SK-N-SH (cell line): ENCODE measurements at regions of chr6 and their contacts with region 1.

Region 1: DNA sequence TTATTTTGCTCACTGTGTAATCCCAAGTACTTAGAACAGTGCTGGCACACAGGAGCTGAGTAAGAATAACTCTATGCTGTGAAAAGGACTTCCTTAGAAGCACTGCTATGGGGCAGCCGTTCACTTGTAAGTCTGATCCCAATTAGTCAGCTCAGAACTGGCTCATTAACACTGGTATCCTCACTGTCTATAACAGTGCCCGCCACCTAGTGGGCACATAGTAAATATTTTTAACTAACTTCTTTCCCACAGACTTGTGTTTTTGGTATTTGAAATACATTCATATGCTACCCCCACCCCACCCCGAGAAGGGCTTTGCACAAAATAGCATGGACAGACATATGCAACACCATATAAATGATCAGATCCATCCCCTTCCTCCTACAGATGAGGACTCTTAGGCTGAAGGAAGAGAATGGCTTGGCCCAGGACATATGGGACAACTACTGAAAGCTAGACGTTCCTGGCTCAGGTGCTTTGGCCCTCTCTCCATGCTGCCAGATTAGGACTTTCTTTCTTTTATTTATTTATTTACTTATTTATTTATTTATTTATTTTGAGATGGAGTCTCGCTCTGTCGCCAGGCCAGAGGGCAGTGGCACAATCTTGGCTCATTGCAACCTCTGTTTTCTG is 47.1 kb downstream of the DST start:
- DNase-seq: peak; percentile 10
- H3K4me3 ChIP-seq: no peak overlapping the region
- H3K27ac ChIP-seq: peak overlapping the region in 1 of 2 experiments; percentile 22; a peak in 1 of 4 replicates
- H3K4me1 ChIP-seq: no peaks in the 10 kb centered on the region; a peak in 2 of 4 replicates
- H3K27me3 ChIP-seq: no peaks in the 10 kb centered on the region
- CTCF ChIP-seq: peak; percentile 83
- EP300 ChIP-seq: no peak
- RAD21 ChIP-seq: peak; percentile 62

Region 2: DNA sequence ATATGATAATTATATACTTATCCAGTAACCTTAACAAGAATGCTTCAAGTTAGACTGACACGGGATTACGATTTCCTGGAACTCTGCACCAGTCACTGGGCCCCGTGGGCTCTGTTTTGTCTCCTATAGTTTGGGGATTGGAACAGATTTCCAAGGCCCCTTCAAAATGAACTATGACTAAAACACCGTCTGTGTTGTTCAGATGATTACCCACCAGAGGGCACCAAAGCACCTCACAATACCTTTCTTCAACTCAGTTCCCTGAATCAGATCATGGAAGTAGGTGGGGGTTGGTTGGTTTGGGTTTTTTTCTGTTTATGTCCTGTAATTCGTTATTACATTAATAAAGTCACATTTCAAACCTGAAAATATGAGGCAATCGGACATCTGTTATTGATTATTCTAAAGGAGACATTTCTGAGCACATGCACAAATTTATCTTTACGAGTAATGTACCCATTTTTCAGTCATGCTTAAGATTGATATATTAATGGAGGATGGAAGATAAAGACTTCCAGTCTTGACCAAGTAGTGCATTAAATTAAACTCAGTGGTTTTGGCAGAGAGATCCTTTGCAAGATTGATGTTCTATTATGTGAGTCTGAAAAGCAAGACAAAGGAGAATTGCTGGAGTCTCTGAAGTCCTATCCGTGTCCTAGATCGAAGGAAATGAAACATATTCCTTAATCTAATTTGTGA is 236.3 kb before region 1 on chr6:
- CTCF ChIA-PET with region 1: interaction called, 135 read pairs
- POLR2A ChIA-PET with region 1: no interaction called
- DNase-seq: peak; percentile 50
- H3K4me3 ChIP-seq: peak overlapping the region; percentile 15 to 16; a peak in 2 of 4 replicates
- H3K27ac ChIP-seq: peak overlapping the region; percentile 22 to 54; a peak in 3 of 4 replicates
- H3K4me1 ChIP-seq: peaks cover 23 to 41% of the 10 kb centered on the region in 2 experiments
- H3K27me3 ChIP-seq: no peaks in the 10 kb centered on the region
- CTCF ChIP-seq: peak; percentile 79
- EP300 ChIP-seq: peak; percentile 38 to 88; a peak in 3 of 4 replicates
- RAD21 ChIP-seq: peak; percentile 98

Region 3: DNA sequence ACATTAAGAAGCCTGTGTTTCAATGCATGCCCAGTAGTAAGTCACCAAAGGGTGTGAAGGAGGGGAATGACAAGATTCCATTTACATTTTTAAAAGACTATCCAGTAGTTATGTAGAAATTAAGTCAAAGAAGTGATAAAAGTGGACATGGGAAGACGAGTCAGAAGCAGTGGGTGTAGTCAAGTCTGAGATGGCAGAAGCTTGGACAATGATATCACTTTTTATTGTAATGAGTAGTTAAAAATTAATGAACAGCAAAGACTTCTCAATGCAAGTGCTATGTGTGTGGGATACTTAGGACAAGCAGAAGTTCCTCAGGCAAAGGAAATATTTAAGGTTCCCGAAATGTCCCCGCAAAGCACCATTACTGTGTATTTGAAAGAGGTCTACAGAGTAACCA is 108.9 kb before region 1 on chr6:
- CTCF ChIA-PET with region 1: interaction called, 10 read pairs
- POLR2A ChIA-PET with region 1: no interaction called
- DNase-seq: no peak
- H3K4me3 ChIP-seq: no peak overlapping the region
- H3K27ac ChIP-seq: peak overlapping the region; percentile 22 to 77; a peak in 1 of 4 replicates
- H3K4me1 ChIP-seq: peaks cover 12% of the 10 kb centered on the region in 2 experiments
- H3K27me3 ChIP-seq: no peaks in the 10 kb centered on the region
- CTCF ChIP-seq: no peak
- EP300 ChIP-seq: no peak
- RAD21 ChIP-seq: no peak

Region 4: GRCh38 chr6:56555438-56555872 is 40.2 kb before region 1 on chr6:
- CTCF ChIA-PET with region 1: interaction called, 53 read pairs
- POLR2A ChIA-PET with region 1: no interaction called
- DNase-seq: no peak
- H3K4me3 ChIP-seq: no peak overlapping the region
- H3K27ac ChIP-seq: peak overlapping the region; percentile 21 to 77; a peak in 3 of 4 replicates
- H3K4me1 ChIP-seq: peaks cover 11 to 13% of the 10 kb centered on the region in 2 experiments; a peak in 2 of 4 replicates
- H3K27me3 ChIP-seq: no peaks in the 10 kb centered on the region
- CTCF ChIP-seq: no peak
- EP300 ChIP-seq: no peak
- RAD21 ChIP-seq: no peak; the same call in 1 of the 2 replicates

Region 5: DNA sequence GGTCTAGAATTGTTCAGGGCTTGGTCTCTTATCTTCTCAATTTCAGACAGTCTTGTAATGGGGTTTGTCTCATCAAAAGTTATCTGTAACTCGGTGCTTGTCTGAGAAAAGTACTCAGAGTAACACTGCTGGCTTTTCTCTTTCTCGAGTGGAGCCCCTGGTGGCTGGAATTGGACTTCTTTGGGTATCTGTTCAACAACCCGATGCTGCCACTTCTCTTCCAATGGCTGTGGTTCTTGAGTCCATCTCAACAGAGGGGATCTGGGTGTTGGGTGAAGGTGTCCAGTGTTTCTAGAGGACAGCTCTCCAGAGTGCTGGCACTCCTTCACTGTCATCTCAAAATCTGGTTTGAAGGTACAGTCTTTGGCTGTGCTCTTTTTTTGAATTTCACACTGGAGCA is 22.4 kb after region 1 on chr6:
- CTCF ChIA-PET with region 1: interaction called, 25 read pairs
- POLR2A ChIA-PET with region 1: no interaction called
- DNase-seq: no peak
- H3K4me3 ChIP-seq: no peak overlapping the region
- H3K27ac ChIP-seq: no peak overlapping the region
- H3K4me1 ChIP-seq: no peaks in the 10 kb centered on the region
- H3K27me3 ChIP-seq: no peaks in the 10 kb centered on the region
- CTCF ChIP-seq: peak; percentile 38
- EP300 ChIP-seq: no peak
- RAD21 ChIP-seq: no peak